Activated naive CD4-positive, alpha-beta T cell treated with anti-CD3 and anti-CD28 coated beads for 36 hours (primary cell): ENCODE measurements at regions of chr17 and their contacts with region 1.

Region 1: GRCh38 chr17:81034779-81035388 is at the start of gene BAIAP2:
- DNase-seq: peak; percentile 95
- H3K4me3 Mint-ChIP-seq: peak within 1 kb of the TSS; percentile 85
- H3K27ac Mint-ChIP-seq: no peak within 1 kb of the TSS
- H3K4me1 Mint-ChIP-seq: peaks cover 15% of the 10 kb centered on the region
- H3K27me3 Mint-ChIP-seq: peaks cover 19% of the 10 kb centered on the region
- total RNA-seq, gene BAIAP2: 3.9 to 4.2 TPM

Region 2: GRCh38 chr17:80855948-80856862 is 178.7 kb before region 1 on chr17:
- CTCF ChIA-PET with region 1: no interaction called
- intact Hi-C with region 1: no loop called
- DNase-seq: peak; percentile 96
- H3K4me3 Mint-ChIP-seq: peak overlapping the region; percentile 9
- H3K27ac Mint-ChIP-seq: peak overlapping the region; percentile 94
- H3K4me1 Mint-ChIP-seq: peaks cover 75% of the 10 kb centered on the region
- H3K27me3 Mint-ChIP-seq: no peaks in the 10 kb centered on the region

Region 3: DNA sequence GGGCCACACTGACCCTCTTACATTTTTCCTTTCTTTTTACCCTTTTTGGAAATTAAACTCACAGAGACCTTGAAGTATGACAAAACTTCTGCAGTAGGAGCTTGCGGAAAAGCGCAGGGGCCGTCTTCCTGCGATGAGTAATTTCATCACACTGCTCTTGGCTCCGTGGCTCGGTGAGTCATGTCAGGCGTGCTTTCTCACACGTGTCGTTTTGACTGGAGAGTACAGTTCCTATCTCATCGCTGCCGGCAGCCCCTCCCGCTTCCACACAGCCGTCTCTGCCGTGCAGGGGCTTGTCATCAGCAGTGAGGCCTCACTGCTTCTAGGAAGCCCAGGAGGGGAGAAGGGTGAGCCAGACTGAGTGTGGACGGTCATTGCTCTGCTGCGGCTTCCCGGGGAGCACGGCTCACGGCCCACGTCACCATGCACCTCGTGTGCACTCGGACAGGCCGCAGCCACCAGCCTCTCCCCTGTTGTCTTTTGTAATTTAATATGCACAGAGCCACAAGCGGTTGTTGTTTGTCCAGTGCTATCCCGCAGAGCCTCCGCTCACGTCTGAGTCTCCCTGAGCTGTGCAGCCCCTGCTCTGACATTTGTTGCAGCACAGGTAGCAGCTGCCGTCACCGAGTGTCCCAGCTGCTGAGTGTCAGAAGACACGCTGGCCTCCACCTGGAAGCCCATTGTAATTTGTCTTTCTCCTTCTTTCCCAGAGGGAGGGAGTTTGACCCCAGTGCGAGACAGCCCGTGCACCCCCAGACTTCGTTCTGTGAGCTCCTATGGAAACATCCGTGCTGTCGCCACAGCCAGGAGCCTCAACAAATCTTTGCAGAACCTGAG is 142.6 kb before region 1 on chr17:
- CTCF ChIA-PET with region 1: no interaction called
- intact Hi-C with region 1: no loop called
- DNase-seq: peak; percentile 97
- H3K4me3 Mint-ChIP-seq: peak overlapping the region; percentile 23
- H3K27ac Mint-ChIP-seq: peak overlapping the region; percentile 93
- H3K4me1 Mint-ChIP-seq: peaks cover 63% of the 10 kb centered on the region
- H3K27me3 Mint-ChIP-seq: no peaks in the 10 kb centered on the region

Region 4: GRCh38 chr17:81018044-81018802 is 16.7 kb before region 1 on chr17:
- CTCF ChIA-PET with region 1: interaction called, 11 read pairs
- intact Hi-C with region 1: no loop called
- DNase-seq: peak; percentile 60
- H3K4me3 Mint-ChIP-seq: peak overlapping the region; percentile 60
- H3K27ac Mint-ChIP-seq: peak overlapping the region; percentile 75
- H3K4me1 Mint-ChIP-seq: peaks cover 12% of the 10 kb centered on the region
- H3K27me3 Mint-ChIP-seq: no peaks in the 10 kb centered on the region

Region 5: GRCh38 chr17:81044764-81045589 is 10.1 kb after region 1 on chr17:
- CTCF ChIA-PET with region 1: no interaction called
- intact Hi-C with region 1: no loop called
- DNase-seq: no peak
- H3K4me3 Mint-ChIP-seq: no peak overlapping the region
- H3K27ac Mint-ChIP-seq: no peak overlapping the region
- H3K4me1 Mint-ChIP-seq: peaks cover 7% of the 10 kb centered on the region
- H3K27me3 Mint-ChIP-seq: no peaks in the 10 kb centered on the region

Region 6: DNA sequence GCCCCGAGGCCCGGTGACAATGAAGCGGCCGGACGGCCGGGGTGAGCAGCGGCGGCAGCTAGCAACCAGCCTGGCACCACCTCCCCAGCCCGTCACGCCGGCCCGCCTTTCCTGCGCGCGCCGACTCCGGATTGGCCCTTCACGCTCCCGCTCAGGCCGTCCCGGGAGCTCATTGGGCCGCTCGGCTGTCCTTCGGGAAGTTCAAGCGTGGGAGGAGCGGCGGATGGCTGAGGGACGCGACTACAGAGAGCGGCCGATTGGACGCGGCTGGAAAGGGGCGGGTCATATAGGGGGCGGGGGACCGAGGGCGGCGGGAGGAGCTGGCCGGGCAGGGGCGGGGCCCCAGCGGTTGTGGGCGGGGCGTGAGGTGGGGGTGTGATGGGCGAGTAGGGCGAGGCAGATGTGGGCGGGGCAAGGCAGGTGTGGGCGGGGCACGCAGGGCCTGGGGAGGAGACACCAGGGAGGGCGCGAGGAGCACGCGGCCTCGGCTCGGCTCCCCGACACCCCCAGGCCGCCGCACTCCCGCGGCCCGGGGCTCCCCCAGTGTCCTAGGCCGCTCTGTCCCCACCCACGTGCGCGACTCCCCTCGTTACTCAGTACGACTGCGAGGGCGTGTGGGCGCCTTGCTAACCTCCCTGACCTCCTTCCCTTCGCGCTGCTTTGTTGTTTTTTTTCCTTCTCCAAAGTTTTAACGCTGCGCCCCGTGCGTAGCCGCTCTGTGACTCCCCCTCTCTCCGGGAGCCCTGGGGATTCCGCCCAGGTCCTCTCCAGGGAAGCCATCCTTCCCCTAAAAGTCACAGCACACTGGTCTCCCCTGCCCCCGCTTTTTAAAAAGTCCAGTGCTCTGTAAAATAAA is 188.2 kb after region 1 on chr17 and contains the start of gene CEP131:
- CTCF ChIA-PET with region 1: no interaction called
- intact Hi-C with region 1: loop called (anchors 5 kb)
- DNase-seq: peak; percentile 100
- H3K4me3 Mint-ChIP-seq: peak within 1 kb of the TSS; percentile 77
- H3K27ac Mint-ChIP-seq: peak within 1 kb of the TSS; percentile 13
- H3K4me1 Mint-ChIP-seq: peaks cover 16% of the 10 kb centered on the region
- H3K27me3 Mint-ChIP-seq: no peaks in the 10 kb centered on the region
- total RNA-seq, gene CEP131: 9.4 to 9.8 TPM